Mammary epithelial cell (primary cell): ENCODE measurements at regions of chr4 and their contacts with region 1.

Region 1: DNA sequence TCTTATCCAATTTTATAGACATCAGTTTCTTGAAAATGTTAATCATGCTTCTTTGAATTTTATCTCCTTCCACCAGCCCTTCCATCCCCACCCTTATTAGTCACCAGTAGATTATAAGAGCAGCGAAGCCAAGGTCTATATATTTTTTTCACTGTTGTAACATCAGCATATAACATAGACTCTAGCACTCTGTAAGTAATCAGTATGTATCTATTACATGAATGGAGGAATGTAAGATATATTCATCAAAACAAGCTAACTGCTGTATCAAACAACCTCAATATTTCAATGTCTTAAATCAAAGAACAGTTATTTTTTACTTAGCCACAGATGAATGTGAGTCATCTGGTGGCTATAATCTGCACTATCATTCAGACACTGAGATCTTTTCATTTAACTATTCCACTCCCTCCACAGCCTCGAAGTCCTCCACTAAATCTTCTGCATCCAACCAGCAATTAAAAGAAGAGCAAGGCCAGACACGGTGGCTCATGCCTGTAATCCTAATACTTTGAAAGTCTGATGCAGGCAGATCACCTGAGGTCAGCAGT is 178.9 kb downstream of the CENPC start:
- DNase-seq: no peak
- H3K4me3 ChIP-seq: no peak overlapping the region
- H3K27ac ChIP-seq: no peak overlapping the region
- H3K4me1 ChIP-seq: no peaks in the 10 kb centered on the region
- H3K27me3 ChIP-seq: peaks cover 2% of the 10 kb centered on the region
- CTCF ChIP-seq: no peak

Region 2: DNA sequence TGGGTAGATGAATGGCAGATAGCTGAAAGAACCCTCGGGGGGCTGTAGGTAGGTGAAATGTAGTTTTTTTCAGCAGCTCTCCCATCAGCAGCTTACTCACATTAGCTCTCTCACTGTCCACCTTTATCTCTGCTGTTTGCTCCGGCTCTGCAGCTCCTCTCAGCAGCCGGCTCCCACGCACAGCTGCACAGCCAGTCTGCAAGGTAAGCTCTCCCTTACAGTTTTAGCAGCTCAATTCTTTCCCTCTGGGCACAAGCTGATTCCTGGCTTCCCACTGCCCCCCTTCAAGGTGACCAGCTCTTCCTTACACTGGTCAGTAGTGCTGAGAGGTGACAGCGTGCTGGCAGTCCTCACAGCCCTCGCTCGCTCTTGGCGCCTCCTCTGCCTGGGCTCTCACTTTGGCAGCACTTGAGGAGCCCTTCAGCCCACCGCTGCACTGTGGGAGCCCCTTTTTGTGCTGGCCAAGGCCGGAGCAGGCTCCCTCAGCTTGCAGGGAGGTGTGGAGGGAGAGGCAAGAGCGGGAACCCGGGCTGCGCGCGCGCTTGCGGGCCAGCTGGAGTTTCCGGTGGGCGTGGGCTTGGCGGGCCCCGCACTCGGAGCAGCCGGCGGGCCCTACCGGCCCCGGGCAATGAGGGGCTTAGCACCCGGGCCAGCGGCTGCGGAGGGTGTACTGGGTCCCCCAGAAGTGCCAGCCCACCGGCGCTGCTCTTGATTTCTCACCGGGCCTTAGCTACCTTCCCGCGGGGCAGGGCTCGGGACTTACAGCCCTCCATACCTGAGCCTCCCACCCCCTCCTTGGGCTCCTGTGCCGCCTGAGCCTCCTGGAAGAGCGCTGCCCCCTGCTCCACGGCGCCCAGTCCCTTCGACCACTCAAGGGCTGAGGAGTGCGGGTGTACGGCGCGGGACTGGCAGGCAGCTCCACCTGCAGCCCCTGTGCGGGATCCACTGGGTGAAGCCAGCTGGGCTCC is 214.7 kb before region 1 on chr4:
- CTCF ChIA-PET with region 1: no interaction called
- dilution Hi-C with region 1: no loop called
- in situ Hi-C with region 1: no loop called
- intact Hi-C with region 1: no loop called
- DNase-seq: no peak
- H3K4me3 ChIP-seq: no peak overlapping the region
- H3K27ac ChIP-seq: no peak overlapping the region
- H3K4me1 ChIP-seq: no peaks in the 10 kb centered on the region
- H3K27me3 ChIP-seq: no peaks in the 10 kb centered on the region
- CTCF ChIP-seq: no peak

Region 3: GRCh38 chr4:67342291-67342690 is 24.1 kb before region 1 on chr4:
- CTCF ChIA-PET with region 1: no interaction called
- dilution Hi-C with region 1: no loop called
- in situ Hi-C with region 1: no loop called
- intact Hi-C with region 1: no loop called
- DNase-seq: no peak
- H3K4me3 ChIP-seq: no peak overlapping the region
- H3K27ac ChIP-seq: no peak overlapping the region
- H3K4me1 ChIP-seq: no peaks in the 10 kb centered on the region
- H3K27me3 ChIP-seq: peaks cover 3% of the 10 kb centered on the region
- CTCF ChIP-seq: no peak

Region 4: GRCh38 chr4:67401902-67402301 is 35.5 kb after region 1 on chr4:
- CTCF ChIA-PET with region 1: interaction called, 14 read pairs
- dilution Hi-C with region 1: no loop called
- in situ Hi-C with region 1: no loop called
- intact Hi-C with region 1: no loop called
- DNase-seq: no peak
- H3K4me3 ChIP-seq: no peak overlapping the region
- H3K27ac ChIP-seq: no peak overlapping the region
- H3K4me1 ChIP-seq: no peaks in the 10 kb centered on the region
- H3K27me3 ChIP-seq: no peaks in the 10 kb centered on the region
- CTCF ChIP-seq: no peak

Region 5: GRCh38 chr4:67700738-67701516 is 334.5 kb after region 1 on chr4 and contains the start of gene UBA6:
- CTCF ChIA-PET with region 1: no interaction called
- dilution Hi-C with region 1: no loop called
- in situ Hi-C with region 1: no loop called
- intact Hi-C with region 1: no loop called
- DNase-seq: peak; percentile 96
- H3K4me3 ChIP-seq: peak within 1 kb of the TSS; percentile 68 to 88 (median 86)
- H3K27ac ChIP-seq: peak within 1 kb of the TSS; percentile 96
- H3K4me1 ChIP-seq: peaks cover 18% of the 10 kb centered on the region
- H3K27me3 ChIP-seq: no peaks in the 10 kb centered on the region
- CTCF ChIP-seq: peak in 1 of 2 donors; percentile 50
- total RNA-seq, gene UBA6: 178 to 203 TPM